Body of pancreas (tissue), 4 donors: ENCODE measurements at regions of chr7 and their contacts with region 1.

Region 1: GRCh38 chr7:6323967-6324701 is 51.7 kb upstream of the CYTH3 start:
- DNase-seq: no peak
- ATAC-seq: no peak
- H3K4me3 ChIP-seq: no peak overlapping the region
- H3K27ac ChIP-seq: no peak overlapping the region
- H3K4me1 ChIP-seq: no peaks in the 10 kb centered on the region
- H3K27me3 ChIP-seq: no peaks in the 10 kb centered on the region
- CTCF ChIP-seq: no peak
- POLR2A ChIP-seq: no peak

Region 2: GRCh38 chr7:5854738-5855137 is 469.4 kb before region 1 on chr7:
- intact Hi-C with region 1: loop called (anchors 10 kb)
- DNase-seq: no peak
- ATAC-seq: no peak
- H3K4me3 ChIP-seq: no peak overlapping the region
- H3K27ac ChIP-seq: no peak overlapping the region
- H3K4me1 ChIP-seq: peaks cover 4% of the 10 kb centered on the region
- H3K27me3 ChIP-seq: no peaks in the 10 kb centered on the region
- CTCF ChIP-seq: no peak
- POLR2A ChIP-seq: no peak

Region 3: GRCh38 chr7:5997222-5997808 is 326.8 kb before region 1 on chr7:
- intact Hi-C with region 1: loop called (anchors 10 kb)
- DNase-seq: peak; percentile 58 to 75 (median 68)
- ATAC-seq: peak; percentile 79
- H3K4me3 ChIP-seq: no peak overlapping the region
- H3K27ac ChIP-seq: no peak overlapping the region
- H3K4me1 ChIP-seq: peaks cover 11% of the 10 kb centered on the region
- H3K27me3 ChIP-seq: no peaks in the 10 kb centered on the region
- CTCF ChIP-seq: peak; percentile 45 to 82 (median 64)
- POLR2A ChIP-seq: no peak

Region 4: GRCh38 chr7:6375348-6376101 is 51.4 kb after region 1 on chr7:
- intact Hi-C with region 1: no loop called
- DNase-seq: peak in 1 of 4 donors; percentile 20
- ATAC-seq: no peak
- H3K4me3 ChIP-seq: peak overlapping the region; percentile 47 to 75
- H3K27ac ChIP-seq: peak overlapping the region; percentile 6 to 94 (median 88)
- H3K4me1 ChIP-seq: peaks cover 49% of the 10 kb centered on the region
- H3K27me3 ChIP-seq: no peaks in the 10 kb centered on the region
- CTCF ChIP-seq: no peak
- POLR2A ChIP-seq: no peak